Activated CD4-positive, alpha-beta memory T cell treated with anti-CD3 and anti-CD28 coated beads, Interleukin-2, amount 10 ng/mL, durations not matched to agents 7 days and 5 days (primary cell): ENCODE measurements at regions of chr1 and their contacts with region 1.

Region 1: DNA sequence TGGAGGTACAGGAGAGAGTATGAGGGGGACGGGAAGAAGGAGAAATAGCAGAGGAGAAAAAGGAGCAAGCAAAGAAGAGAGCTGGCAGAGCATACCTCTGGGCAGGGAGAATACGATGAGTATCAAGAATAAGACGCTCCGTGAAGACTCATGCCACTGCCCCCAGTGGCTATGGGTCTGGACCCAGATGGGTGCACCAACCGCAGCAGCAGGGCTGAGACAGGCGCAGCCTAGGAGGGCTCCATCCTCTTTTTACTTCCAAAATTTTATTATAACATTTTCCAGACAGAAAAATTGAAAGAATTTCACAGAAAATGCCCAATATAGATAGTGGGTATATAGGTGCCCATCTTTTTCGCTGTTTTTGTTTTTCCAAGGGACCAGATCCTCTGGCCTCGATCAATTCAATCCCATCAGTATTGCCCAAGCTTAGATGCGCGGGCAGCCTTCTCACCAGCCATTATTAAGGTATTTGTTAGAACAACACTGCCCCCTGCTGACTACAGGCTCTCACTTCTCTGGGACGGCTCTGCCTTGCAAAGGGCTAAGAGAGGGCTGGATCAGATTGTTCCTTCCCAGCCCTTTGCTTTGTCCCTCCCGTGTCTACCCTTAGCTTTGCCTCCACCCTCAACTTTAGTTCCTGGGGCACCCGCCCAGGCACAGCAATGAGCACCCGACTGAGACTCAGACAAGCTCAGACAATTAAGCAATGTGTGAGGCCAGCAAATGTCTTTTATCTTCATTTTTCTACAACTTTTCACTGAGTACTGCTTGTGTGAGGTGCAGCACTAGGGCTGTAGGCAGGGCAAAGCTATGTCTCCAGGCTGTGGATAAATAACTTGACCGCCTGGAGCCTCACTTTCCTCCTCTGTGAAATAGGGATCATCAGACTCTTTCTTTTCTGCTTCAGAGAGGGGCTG is 17.5 kb upstream of the CAMK1G start:
- DNase-seq: peak; percentile 79
- H3K4me3 Mint-ChIP-seq: no peak overlapping the region
- H3K27ac Mint-ChIP-seq: no peak overlapping the region
- H3K4me1 Mint-ChIP-seq: peaks cover 9% of the 10 kb centered on the region
- H3K27me3 Mint-ChIP-seq: peaks cover 21% of the 10 kb centered on the region

Region 2: GRCh38 chr1:209497729-209498128 is 68.3 kb before region 1 on chr1:
- CTCF ChIA-PET with region 1: no interaction called
- POLR2A ChIA-PET with region 1: no interaction called
- DNase-seq: no peak
- H3K4me3 Mint-ChIP-seq: no peak overlapping the region
- H3K27ac Mint-ChIP-seq: no peak overlapping the region
- H3K4me1 Mint-ChIP-seq: no peaks in the 10 kb centered on the region
- H3K27me3 Mint-ChIP-seq: peaks cover 22% of the 10 kb centered on the region

Region 3: GRCh38 chr1:209692745-209693504 is 126.9 kb after region 1 on chr1:
- CTCF ChIA-PET with region 1: interaction called, 39 read pairs
- POLR2A ChIA-PET with region 1: no interaction called
- DNase-seq: peak; percentile 81
- H3K4me3 Mint-ChIP-seq: no peak overlapping the region
- H3K27ac Mint-ChIP-seq: no peak overlapping the region
- H3K4me1 Mint-ChIP-seq: peaks cover 46% of the 10 kb centered on the region
- H3K27me3 Mint-ChIP-seq: no peaks in the 10 kb centered on the region